Prostate gland (tissue), 2 donors: ENCODE measurements at regions of chr1 and their contacts with region 1.

Region 1: DNA sequence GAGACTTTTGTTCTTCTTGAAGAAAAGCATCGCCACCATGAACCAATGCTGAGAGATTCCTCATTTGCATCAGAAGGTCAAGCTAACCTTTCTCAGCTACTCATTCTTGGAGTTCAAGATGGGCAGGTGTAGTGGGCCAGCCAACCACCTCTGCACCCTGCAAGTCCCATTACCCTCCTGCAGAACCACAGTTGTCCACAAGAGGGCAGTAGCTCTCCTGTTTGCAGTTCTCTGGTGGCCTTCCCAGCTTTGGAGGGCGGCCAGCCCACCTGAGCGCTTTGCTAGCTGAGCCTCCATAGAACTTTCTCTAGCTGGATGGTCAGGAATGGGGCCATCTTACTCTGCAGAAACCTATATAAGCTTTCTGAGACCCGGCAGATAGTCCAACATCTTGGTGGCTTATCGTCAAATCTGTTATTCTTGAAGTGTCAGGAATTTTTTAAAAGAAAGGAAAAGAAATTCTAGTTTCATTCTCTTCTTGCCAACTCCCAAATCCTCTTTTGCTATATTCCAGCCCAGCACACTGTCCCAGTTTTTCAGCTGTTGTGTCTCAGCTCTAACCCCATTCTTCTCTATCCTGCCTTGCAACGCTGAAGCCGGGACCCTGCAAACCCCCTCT is 11.0 kb upstream of the LMX1A start:
- DNase-seq: peak; percentile 83
- H3K4me3 ChIP-seq: no peak overlapping the region
- H3K27ac ChIP-seq: no peak overlapping the region
- H3K4me1 ChIP-seq: no peaks in the 10 kb centered on the region
- H3K27me3 ChIP-seq: no peaks in the 10 kb centered on the region
- CTCF ChIP-seq: peak; percentile 76 to 88 (median 80)
- POLR2A ChIP-seq: no peak

Region 2: DNA sequence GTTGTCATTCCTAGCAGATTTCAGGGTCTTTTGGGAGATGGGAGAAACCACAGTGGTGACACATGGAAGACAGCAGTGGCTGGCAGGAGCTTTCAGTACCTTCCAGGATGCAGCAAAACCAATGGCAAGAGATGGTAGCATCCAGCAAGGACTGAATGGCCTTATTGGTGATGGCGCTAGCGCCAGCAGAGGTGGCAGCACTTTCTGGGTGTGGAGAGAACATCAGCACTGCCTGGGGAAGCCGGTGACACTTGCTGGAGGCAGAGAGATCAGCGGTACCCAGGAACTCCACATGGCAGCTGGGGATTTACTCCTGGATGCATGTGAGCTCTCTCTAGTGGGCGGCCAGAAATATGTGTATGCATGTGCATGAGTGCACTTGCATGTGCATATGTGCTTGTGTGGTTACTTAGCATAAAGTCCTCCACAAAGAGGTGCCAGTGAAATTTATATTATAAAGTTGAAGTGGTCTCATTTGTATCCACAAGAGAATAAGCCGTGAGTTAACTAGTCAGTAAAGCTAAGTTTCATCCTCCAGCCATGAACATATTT is 375.6 kb before region 1 on chr1:
- intact Hi-C with region 1: no loop called
- DNase-seq: no peak
- H3K4me3 ChIP-seq: no peak overlapping the region
- H3K27ac ChIP-seq: no peak overlapping the region
- H3K4me1 ChIP-seq: no peaks in the 10 kb centered on the region
- H3K27me3 ChIP-seq: no peaks in the 10 kb centered on the region
- CTCF ChIP-seq: no peak
- POLR2A ChIP-seq: no peak

Region 3: GRCh38 chr1:165144757-165145397 is 222.6 kb before region 1 on chr1:
- intact Hi-C with region 1: loop called (anchors 5 kb)
- DNase-seq: peak; percentile 50
- H3K4me3 ChIP-seq: no peak overlapping the region
- H3K27ac ChIP-seq: no peak overlapping the region
- H3K4me1 ChIP-seq: no peaks in the 10 kb centered on the region
- H3K27me3 ChIP-seq: no peaks in the 10 kb centered on the region
- CTCF ChIP-seq: peak in 3 of 4 experiments; percentile 67 to 71 (median 67)
- POLR2A ChIP-seq: no peak